ENCODE measurements at regions of chr2 and their contacts with region 1.

Region 1: GRCh38 chr2:135913727-135914365 is 37.6 kb upstream of the MCM6 start:
- DNase-seq: peak in 2 of 4 donors; percentile 31 to 49
- ATAC-seq: peak; percentile 71
- H3K4me3 ChIP-seq: no peak overlapping the region
- H3K27ac ChIP-seq: peak overlapping the region in 1 of 2 donors; percentile 9
- H3K4me1 ChIP-seq: no peaks in the 10 kb centered on the region
- H3K27me3 ChIP-seq: no peaks in the 10 kb centered on the region
- CTCF ChIP-seq: peak; percentile 75

Region 2: DNA sequence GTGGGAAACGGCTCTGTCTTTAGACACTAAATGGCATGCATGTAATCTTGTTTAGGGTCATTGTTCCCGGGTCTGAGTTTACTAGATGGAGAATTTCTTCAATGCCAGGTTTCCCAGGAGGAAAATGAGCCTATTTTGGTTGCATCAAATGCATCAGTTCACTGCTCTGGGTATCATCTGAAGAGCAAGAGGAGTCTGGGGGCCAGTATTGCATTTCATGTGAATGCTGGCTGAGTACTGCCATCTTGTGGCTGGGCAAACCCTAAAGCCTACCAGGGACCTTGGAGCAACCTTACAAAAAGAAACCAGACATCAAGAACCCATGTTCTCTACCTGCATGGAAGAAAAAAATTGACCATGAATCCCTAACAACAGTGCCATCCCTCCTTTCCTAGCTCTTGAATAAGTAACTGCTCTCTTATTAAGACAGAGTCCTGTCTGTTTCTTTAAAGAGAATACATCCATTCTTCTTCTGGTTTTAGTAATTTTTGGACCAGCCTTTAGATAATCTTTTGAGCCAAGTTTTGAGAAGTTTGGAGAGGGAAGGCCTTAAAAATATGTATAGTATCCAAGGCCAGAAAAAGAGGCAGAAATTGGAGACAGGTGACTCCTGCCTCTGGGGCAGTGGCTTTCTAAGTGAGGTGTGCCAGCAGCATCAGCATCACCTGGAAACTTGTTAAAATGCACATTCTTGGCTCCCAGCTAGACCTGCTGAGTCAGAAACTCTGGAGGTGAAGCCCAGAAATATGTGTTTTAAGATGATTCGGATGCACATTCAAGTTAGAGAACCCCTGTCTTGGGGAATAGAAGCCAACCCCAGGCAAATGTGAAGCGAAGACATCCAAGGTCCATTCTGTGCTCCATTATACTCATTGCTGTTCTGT is 465.1 kb after region 1 on chr2:
- intact Hi-C with region 1: loop called (anchors 5 to 10 kb)
- DNase-seq: peak in 3 of 4 donors; percentile 12 to 66 (median 50)
- ATAC-seq: peak; percentile 86
- H3K4me3 ChIP-seq: no peak overlapping the region
- H3K27ac ChIP-seq: no peak overlapping the region
- H3K4me1 ChIP-seq: peaks cover 0 to 7% of the 10 kb centered on the region in 2 donors
- H3K27me3 ChIP-seq: no peaks in the 10 kb centered on the region
- CTCF ChIP-seq: peak; percentile 66 to 75

Region 3: DNA sequence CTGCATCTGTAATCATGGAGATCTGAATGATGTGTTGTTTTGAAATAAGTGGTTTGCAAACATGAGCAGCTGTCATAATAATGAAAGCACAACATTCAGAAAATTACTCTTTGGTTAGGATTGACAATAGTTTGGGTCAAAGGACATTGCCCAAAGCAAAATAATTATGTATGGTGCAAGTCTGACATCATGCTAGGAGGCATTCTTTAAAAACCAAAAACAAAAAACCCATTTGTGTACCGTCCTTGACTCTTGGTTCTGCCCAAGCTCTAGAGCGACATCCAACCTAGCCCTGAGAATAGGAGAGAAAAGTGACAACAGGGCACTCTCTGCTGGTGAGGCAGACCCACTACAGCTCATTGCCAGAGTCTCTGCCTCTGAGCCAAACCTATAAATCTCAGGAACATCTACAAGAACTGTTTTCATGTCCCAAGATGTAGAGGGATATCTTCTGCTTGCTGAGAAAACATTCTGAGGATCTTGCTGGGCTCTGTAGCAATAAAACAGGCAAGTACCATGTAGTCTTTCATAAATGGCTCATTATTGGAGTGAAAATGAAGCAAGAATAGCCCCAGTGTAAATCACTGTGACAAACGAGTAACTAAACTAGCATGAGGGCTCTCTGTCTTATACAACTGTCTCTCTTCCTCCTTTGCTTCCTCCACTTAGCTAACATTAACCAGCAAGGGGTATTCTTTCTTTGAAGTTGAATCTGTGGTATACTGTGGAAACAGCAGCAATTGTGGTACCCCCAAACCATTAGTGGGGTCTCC is 470.9 kb after region 1 on chr2:
- intact Hi-C with region 1: loop called (anchors 5 to 10 kb)
- DNase-seq: peak in 2 of 4 donors; percentile 22 to 51
- ATAC-seq: peak; percentile 91
- H3K4me3 ChIP-seq: no peak overlapping the region
- H3K27ac ChIP-seq: no peak overlapping the region
- H3K4me1 ChIP-seq: peaks cover 0 to 15% of the 10 kb centered on the region in 2 donors
- H3K27me3 ChIP-seq: no peaks in the 10 kb centered on the region
- CTCF ChIP-seq: peak; percentile 33 to 62

Measured in left lung (tissue), 14 donors.